H1 (cell line): ENCODE measurements at regions of chr22 and their contacts with region 1.

Region 1: GRCh38 chr22:38481162-38481870 is 13.4 kb downstream of the KDELR3 start:
- DNase-seq: no peak
- H3K4me3 ChIP-seq: no peak overlapping the region
- H3K27ac ChIP-seq: no peak overlapping the region; the same call in 1 of the 2 replicates
- H3K4me1 ChIP-seq: 0 out of 7 replicates have a peak, but pooled peaks cover 0 to 3% (median 0%) of the 10 kb centered on the region in 4 experiments
- H3K27me3 ChIP-seq: no peaks in the 10 kb centered on the region
- CTCF ChIP-seq: no peak
- EP300 ChIP-seq: no peak
- POLR2A ChIP-seq: peak in 1 of 2 experiments; percentile 33; a peak in 1 of 3 replicates
- RAD21 ChIP-seq: no peak

Region 2: GRCh38 chr22:38403812-38404211 is 77.5 kb before region 1 on chr22:
- CTCF ChIA-PET with region 1: no interaction called
- POLR2A ChIA-PET with region 1: no interaction called
- DNase-seq: no peak
- H3K4me3 ChIP-seq: no peak overlapping the region
- H3K27ac ChIP-seq: no peak overlapping the region
- H3K4me1 ChIP-seq: peaks cover 0 to 11% (median 7%) of the 10 kb centered on the region in 4 experiments; a peak in 5 of 7 replicates
- H3K27me3 ChIP-seq: no peaks in the 10 kb centered on the region
- CTCF ChIP-seq: no peak
- EP300 ChIP-seq: no peak
- POLR2A ChIP-seq: no peak
- RAD21 ChIP-seq: no peak

Region 3: DNA sequence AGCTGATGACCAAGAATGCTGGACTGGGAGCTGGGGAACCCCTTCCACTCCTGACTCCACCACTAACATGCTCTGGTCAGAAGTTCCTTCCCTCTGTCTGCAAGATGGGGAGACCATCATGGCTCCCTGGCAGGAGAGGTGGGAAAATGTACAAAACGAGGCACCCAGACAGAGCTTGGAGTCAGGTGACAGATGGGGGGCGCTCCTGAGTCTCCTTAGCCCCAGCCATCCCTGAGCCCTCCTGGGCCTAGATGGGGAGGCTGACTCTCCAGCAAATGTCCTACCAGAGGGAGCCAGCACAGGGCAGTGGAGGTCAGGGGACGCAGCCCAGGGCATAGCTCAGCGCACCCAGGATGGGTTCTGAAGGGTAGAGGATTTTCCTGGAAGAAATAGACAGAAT is 46.3 kb before region 1 on chr22:
- CTCF ChIA-PET with region 1: interaction called, 7 read pairs
- POLR2A ChIA-PET with region 1: interaction called, 17 read pairs
- DNase-seq: peak in 1 of 2 experiments; percentile 77
- H3K4me3 ChIP-seq: no peak overlapping the region
- H3K27ac ChIP-seq: no peak overlapping the region
- H3K4me1 ChIP-seq: peaks cover 0 to 2% (median 0%) of the 10 kb centered on the region in 4 experiments; a peak in 4 of 7 replicates
- H3K27me3 ChIP-seq: no peaks in the 10 kb centered on the region
- CTCF ChIP-seq: peak; percentile 67 to 81 (median 74)
- EP300 ChIP-seq: no peak
- POLR2A ChIP-seq: no peak
- RAD21 ChIP-seq: peak; percentile 59 to 67

Region 4: DNA sequence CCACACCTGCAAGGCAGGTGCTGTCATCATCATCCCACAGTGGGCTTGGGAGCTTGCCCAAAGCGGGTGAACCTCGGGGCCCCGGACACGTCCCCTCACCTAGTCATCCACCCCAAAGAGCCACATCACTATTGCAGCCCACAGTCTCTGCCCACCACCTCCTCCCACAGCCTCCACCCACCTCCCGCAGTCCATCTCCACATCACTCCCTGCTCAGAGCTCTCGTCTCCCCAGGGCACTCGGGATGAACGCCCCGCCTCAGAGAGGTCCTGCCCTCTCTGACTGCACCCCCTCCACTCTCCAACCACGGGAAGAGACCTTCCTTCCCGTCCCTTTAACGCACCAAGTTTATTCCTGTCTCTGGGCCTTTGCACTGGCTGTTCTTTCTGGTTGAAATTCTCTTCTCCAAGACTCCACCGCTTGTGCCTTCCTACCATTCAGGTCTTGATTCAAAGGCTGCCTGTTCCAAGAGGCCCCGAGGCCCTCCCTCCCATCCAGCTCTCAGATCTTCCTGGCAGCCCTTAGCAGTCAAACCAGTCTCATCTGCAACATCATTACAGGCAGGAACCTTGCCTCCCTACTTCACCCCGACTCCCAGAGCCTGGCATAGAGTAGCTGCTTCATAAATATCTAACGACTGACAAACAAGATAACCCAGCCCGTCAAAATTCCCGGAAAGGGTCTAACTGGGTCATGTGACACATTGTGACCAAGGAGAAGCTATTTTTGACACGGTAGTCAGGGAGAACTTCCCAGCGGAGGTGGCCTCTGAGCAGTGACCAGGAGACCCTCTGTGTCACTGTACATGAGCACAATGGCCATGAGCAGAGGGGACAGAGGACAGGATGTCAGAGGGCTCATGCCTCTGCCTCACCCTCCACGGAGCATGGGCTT is 37.4 kb before region 1 on chr22:
- CTCF ChIA-PET with region 1: interaction called, 4 read pairs
- POLR2A ChIA-PET with region 1: interaction called, 11 read pairs
- DNase-seq: no peak
- H3K4me3 ChIP-seq: no peak overlapping the region
- H3K27ac ChIP-seq: no peak overlapping the region
- H3K4me1 ChIP-seq: no peaks in the 10 kb centered on the region
- H3K27me3 ChIP-seq: no peaks in the 10 kb centered on the region
- CTCF ChIP-seq: no peak
- EP300 ChIP-seq: no peak
- POLR2A ChIP-seq: no peak
- RAD21 ChIP-seq: no peak

Region 5: GRCh38 chr22:38452373-38453065 is 28.8 kb before region 1 on chr22:
- CTCF ChIA-PET with region 1: interaction called, 3 read pairs
- POLR2A ChIA-PET with region 1: interaction called, 1,102 read pairs
- DNase-seq: no peak
- H3K4me3 ChIP-seq: no peak overlapping the region
- H3K27ac ChIP-seq: no peak overlapping the region
- H3K4me1 ChIP-seq: peaks cover 0 to 18% (median 9%) of the 10 kb centered on the region in 4 experiments; a peak in 6 of 7 replicates
- H3K27me3 ChIP-seq: peaks cover 15 to 37% (median 30%) of the 10 kb centered on the region in 4 experiments
- CTCF ChIP-seq: no peak
- EP300 ChIP-seq: no peak
- POLR2A ChIP-seq: no peak
- RAD21 ChIP-seq: no peak

Region 6: DNA sequence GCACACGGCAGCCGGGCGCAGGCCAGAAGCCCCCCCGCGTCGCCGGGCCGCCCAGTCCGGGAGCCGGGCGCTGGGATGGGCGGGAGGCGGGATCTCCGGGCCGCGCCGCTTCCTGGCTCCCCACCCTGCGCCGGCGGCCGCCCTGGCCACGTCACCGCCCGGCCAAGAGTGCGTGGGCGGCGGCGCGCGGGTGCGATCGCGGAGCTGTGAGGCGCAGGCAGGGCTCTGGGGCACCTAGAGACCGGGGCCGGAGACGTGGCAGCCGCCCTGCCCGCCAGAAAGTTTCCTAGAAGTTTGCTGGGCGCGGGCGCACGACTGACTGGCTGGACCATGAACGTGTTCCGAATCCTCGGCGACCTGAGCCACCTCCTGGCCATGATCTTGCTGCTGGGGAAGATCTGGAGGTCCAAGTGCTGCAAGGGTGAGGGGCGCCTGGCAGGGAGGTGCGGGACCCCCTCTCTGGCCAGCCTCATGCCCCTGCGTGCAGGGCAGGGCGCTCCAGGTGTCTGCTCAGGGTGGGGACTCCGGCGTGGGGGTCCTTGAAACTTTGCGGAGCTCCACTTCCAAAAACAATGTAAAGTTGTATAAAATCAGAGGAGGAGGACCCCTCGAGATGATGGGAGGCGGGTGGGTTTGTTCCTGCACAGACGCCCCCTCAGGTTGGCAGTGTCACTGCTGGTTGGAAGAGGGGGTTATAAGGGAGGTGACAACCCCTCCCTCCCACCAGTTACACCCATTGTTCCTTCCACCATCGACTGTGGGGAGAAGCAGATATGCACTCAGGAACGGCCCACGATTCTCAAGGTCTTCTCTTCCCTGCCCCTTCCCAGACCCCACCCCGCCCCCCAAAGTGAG is 13.2 kb before region 1 on chr22 and contains the start of gene KDELR3:
- CTCF ChIA-PET with region 1: interaction called, 11 read pairs
- POLR2A ChIA-PET with region 1: interaction called, 1,102 read pairs
- DNase-seq: no peak
- H3K4me3 ChIP-seq: peak within 1 kb of the TSS; percentile 44 to 69 (median 62)
- H3K27ac ChIP-seq: no peak within 1 kb of the TSS
- H3K4me1 ChIP-seq: peaks cover 0 to 13% (median 9%) of the 10 kb centered on the region in 4 experiments; a peak in 5 of 7 replicates
- H3K27me3 ChIP-seq: peaks cover 0 to 24% (median 12%) of the 10 kb centered on the region in 4 experiments; a peak in 6 of 7 replicates
- CTCF ChIP-seq: peak; percentile 28 to 60 (median 56); a peak in 3 of 4 replicates
- EP300 ChIP-seq: no peak
- POLR2A ChIP-seq: no peak
- RAD21 ChIP-seq: no peak; a peak in 1 of 4 replicates
- total RNA-seq, gene KDELR3: 7.8 and 7.9 TPM in 2 replicates

Region 7: DNA sequence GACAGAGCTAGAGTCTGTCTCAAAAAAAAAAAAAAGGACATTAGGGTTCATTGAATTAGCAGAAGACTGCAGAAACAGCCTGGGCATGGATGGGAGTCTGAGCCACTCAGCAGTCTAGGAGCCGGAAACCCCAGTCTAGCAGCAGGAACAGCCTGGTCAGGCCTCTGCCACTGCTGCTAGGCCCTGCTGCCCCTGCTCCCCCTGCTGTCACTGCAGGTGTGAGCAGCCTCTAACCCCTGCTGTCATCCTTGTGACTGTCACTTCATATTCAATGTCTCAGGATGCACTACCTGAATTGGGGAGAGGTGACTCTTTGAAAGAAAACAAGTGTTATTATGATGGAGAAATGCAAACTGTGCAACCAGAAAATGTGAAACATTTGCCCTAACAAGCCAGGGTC is 31.7 kb after region 1 on chr22:
- CTCF ChIA-PET with region 1: interaction called, 5 read pairs
- POLR2A ChIA-PET with region 1: interaction called, 28 read pairs
- DNase-seq: no peak
- H3K4me3 ChIP-seq: no peak overlapping the region
- H3K27ac ChIP-seq: no peak overlapping the region
- H3K4me1 ChIP-seq: peaks cover 0 to 5% (median 3%) of the 10 kb centered on the region in 4 experiments; a peak in 5 of 7 replicates
- H3K27me3 ChIP-seq: no peaks in the 10 kb centered on the region
- CTCF ChIP-seq: peak; percentile 47 to 78 (median 65); a peak in 3 of 4 replicates
- EP300 ChIP-seq: no peak
- POLR2A ChIP-seq: no peak
- RAD21 ChIP-seq: peak; percentile 30 to 52; a peak in 3 of 4 replicates

Region 8: GRCh38 chr22:38569972-38570778 is 88.9 kb after region 1 on chr22 and contains the start of gene DMC1:
- CTCF ChIA-PET with region 1: interaction called, 6 read pairs
- POLR2A ChIA-PET with region 1: interaction called, 13 read pairs
- DNase-seq: peak; percentile 85 to 96
- H3K4me3 ChIP-seq: peak within 1 kb of the TSS; percentile 63 to 92 (median 92)
- H3K27ac ChIP-seq: peak within 1 kb of the TSS; percentile 93
- H3K4me1 ChIP-seq: peaks cover 4 to 12% (median 7%) of the 10 kb centered on the region in 4 experiments; a peak in 5 of 7 replicates
- H3K27me3 ChIP-seq: no peaks in the 10 kb centered on the region
- CTCF ChIP-seq: no peak
- EP300 ChIP-seq: no peak
- POLR2A ChIP-seq: peak; percentile 58 to 80
- RAD21 ChIP-seq: no peak
- total RNA-seq, gene DMC1: 7.1 and 7.2 TPM in 2 replicates